ENCODE measurements at regions of chr3 and their contacts with region 1.

Region 1: GRCh38 chr3:190443257-190443656 is 6.4 kb downstream of the TMEM207 start:
- DNase-seq: no peak
- ATAC-seq: no peak
- H3K4me3 ChIP-seq: no peak overlapping the region
- H3K27ac ChIP-seq: no peak overlapping the region
- H3K4me1 ChIP-seq: no peaks in the 10 kb centered on the region
- H3K27me3 ChIP-seq: no peaks in the 10 kb centered on the region
- CTCF ChIP-seq: peak in 1 of 3 experiments; percentile 6; a peak in 1 of 6 replicates
- EP300 ChIP-seq: no peak
- POLR2A ChIP-seq: no peak
- RAD21 ChIP-seq: no peak

Region 2: DNA sequence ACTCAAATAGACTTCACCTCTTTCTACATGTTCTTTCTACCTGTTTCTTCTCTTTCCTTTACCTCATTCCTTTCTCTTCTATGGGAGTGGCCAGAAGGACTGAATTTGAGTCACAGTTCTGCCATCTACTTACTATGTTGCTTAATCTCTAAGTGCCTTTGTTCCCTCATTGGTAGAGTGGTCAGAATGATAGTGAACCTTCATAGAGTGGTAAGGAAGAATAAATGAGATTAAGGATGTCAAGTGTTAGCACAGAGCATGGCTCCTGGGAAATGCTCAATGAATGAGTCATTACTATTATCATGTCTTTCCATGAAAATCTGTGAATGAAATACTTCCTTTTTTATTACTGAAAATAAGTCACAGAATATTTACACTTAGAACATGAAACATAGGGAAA is 11.0 kb before region 1 on chr3:
- CTCF ChIA-PET with region 1: no interaction called
- POLR2A ChIA-PET with region 1: no interaction called
- RAD21 ChIA-PET with region 1: no interaction called
- SMC1A ChIA-PET with region 1: interaction called, 10 read pairs
- in situ Hi-C with region 1: no loop called
- intact Hi-C with region 1: no loop called
- DNase-seq: no peak
- ATAC-seq: no peak
- H3K4me3 ChIP-seq: no peak overlapping the region
- H3K27ac ChIP-seq: no peak overlapping the region
- H3K4me1 ChIP-seq: no peaks in the 10 kb centered on the region
- H3K27me3 ChIP-seq: no peaks in the 10 kb centered on the region
- CTCF ChIP-seq: no peak
- EP300 ChIP-seq: no peak
- POLR2A ChIP-seq: no peak
- RAD21 ChIP-seq: no peak

Region 3: DNA sequence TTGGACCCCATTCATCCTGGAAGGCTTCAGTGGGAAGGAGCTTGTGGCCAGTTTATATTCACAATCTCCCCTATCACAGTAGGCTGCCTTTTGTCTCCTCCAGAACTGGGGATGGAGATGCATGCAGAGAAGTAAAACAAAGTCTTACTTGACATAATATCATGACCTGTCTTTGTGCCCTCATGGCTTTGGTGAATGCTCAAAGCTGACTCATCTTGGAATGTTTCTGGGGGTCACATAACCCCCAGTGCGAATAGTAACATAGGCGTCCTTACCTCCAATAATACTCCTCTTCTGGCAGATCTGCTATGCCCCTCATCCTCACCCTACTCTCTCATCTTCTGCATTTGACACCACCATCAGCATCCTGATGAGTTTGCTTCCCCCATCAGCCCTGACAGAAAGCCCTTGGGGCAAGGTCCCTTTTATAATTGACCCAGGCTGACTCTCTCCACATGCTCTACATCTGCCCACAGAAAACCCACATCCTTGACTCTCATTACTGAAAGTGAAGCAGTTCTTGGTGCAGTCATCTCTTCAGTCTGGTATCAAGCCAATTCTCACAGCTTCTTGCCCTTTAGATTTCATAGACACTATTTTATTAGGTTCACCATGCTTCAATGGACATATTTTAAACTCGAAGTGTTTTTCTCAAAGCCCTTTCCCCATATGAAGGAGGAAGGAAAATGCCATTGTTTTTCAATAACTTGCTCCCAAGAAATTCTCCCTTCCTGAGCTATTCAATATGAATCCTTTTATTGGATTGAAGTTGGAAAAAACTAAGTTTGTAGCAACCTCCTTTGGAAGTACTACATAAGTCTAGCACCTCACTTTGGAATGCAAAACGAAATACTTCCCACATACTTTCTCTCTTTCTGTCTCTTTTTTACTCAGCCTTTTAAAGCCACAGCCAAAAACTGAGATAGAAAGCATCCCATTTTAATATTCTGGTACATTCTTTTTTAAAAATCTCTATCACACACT is 792.4 kb after region 1 on chr3:
- CTCF ChIA-PET with region 1: no interaction called
- POLR2A ChIA-PET with region 1: no interaction called
- RAD21 ChIA-PET with region 1: no interaction called
- SMC1A ChIA-PET with region 1: no interaction called
- in situ Hi-C with region 1: no loop called
- intact Hi-C with region 1: no loop called
- DNase-seq: peak; percentile 90
- ATAC-seq: peak; percentile 98
- H3K4me3 ChIP-seq: no peak overlapping the region
- H3K27ac ChIP-seq: peak overlapping the region; percentile 17; the same call in 1 of the 2 replicates
- H3K4me1 ChIP-seq: peaks cover 19% of the 10 kb centered on the region; the same call in 1 of the 2 replicates
- H3K27me3 ChIP-seq: no peaks in the 10 kb centered on the region
- CTCF ChIP-seq: no peak
- EP300 ChIP-seq: peak; percentile 64 to 68; a peak in 2 of 4 replicates
- POLR2A ChIP-seq: no peak
- RAD21 ChIP-seq: peak; percentile 30; the same call in 1 of the 2 replicates

Measured in GM12878 (cell line).